Pancreas (tissue), 10 donors: ENCODE measurements at regions of chr11 and their contacts with region 1.

Region 1: DNA sequence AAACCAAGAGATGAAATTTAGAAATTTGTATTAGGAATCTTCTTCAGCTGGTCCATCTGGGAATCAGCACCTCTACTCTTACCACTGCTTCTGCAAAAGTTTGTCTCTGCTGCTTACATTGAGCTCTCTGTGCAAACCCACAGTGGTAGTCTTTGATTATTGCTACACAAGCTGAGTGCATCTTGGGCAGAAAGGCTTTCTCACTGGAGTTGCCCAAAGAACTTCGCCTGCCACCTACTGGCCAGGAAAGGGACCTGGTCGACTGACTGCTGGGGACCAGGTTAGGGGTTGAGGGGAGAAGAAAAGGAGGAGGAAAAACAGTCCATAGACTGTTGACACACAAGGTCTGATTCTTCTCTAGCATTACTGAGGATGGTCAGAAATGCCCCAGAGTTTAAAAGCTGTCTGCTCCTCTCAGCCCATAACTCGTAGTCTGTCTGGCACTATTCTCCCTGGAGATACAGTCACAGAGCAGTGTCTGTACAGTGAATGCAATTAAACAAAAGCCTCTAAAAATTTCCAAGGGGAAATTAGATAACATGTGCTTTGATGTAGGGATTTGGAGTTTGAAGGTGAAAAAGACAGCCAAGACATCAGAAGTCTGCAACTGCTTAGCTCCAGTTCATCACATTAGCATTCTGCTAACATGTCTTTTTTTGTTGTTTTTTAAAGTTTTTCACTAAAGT is 215.0 kb upstream of the CTSC start:
- DNase-seq: peak in 5 of 6 donors; percentile 17 to 57 (median 38)
- ATAC-seq: peak; percentile 53 to 85 (median 79)
- H3K4me3 ChIP-seq: no peak overlapping the region
- H3K27ac ChIP-seq: no peak overlapping the region
- H3K4me1 ChIP-seq: no peaks in the 10 kb centered on the region
- H3K27me3 ChIP-seq: no peaks in the 10 kb centered on the region
- CTCF ChIP-seq: peak; percentile 24 to 57 (median 46)

Region 2: GRCh38 chr11:87352759-87353707 is 1199.5 kb before region 1 on chr11:
- intact Hi-C with region 1: loop called in 1 of 3 experiments (anchors 10 kb)
- DNase-seq: peak; percentile 57 to 98 (median 84)
- ATAC-seq: peak; percentile 92 to 100 (median 98)
- H3K4me3 ChIP-seq: no peak overlapping the region
- H3K27ac ChIP-seq: no peak overlapping the region
- H3K4me1 ChIP-seq: no peaks in the 10 kb centered on the region
- H3K27me3 ChIP-seq: no peaks in the 10 kb centered on the region
- CTCF ChIP-seq: peak; percentile 98 to 100 (median 99)